Heart right ventricle (tissue), 16 donors: ENCODE measurements at regions of chr2 and their contacts with region 1.

Region 1: DNA sequence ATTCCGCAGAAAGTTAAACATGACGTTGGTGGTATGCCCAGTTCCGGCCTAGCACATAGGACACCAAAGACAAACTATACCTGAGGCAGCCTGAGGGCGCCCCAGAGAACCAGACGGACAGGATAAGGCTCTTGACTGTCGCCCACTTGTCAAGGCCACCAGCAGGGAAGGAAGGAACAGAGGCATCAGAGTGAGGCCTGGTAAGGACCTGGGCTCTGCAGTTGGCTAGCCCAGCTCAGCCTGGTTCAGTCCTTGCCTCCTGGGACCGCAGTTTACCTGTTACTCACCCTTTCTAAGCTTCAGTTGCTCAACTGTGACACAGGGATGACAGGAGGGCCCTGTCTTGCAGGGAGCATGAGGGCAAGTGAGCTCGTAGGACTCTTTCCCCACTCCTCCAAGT is 82.1 kb downstream of the ACTR2 start:
- DNase-seq: no peak
- ATAC-seq: peak in 2 of 8 donors; percentile 14 to 16
- H3K4me3 ChIP-seq: peak overlapping the region in 1 of 10 donors; percentile 9
- H3K27ac ChIP-seq: peak overlapping the region; percentile 52 to 90 (median 82)
- H3K4me1 ChIP-seq: peaks cover 9 to 50% (median 22%) of the 10 kb centered on the region in 9 donors
- H3K27me3 ChIP-seq: no peaks in the 10 kb centered on the region
- CTCF ChIP-seq: no peak

Region 2: DNA sequence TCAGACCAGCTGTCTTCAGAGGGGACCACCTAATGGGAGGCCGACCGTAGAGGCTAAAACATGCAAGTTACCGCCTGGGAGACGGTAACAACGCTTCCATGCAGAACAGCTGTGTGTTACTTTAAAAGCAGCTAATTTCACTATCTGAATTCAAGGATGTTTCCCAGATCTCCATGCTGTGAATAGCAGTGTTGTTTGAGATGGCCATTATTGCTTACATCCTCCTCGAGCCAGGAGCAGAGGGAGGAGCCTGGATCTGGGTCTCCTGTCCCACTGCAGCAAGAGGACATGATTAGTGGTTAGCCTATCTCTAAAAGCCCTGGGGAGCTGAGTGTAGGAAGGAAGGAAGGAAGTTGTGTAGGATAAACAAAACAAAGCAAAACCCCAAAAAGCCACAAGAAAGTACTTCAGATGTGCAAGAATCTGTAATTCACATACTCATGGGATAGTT is 31.2 kb before region 1 on chr2:
- intact Hi-C with region 1: loop called in 1 of 10 experiments (anchors 5 kb)
- DNase-seq: peak in 1 of 2 donors; percentile 30
- ATAC-seq: peak in 7 of 8 donors; percentile 39 to 73 (median 51)
- H3K4me3 ChIP-seq: no peak overlapping the region
- H3K27ac ChIP-seq: peak overlapping the region in 8 of 10 donors; percentile 7 to 57 (median 22)
- H3K4me1 ChIP-seq: peaks cover 10 to 64% (median 38%) of the 10 kb centered on the region in 9 donors
- H3K27me3 ChIP-seq: no peaks in the 10 kb centered on the region
- CTCF ChIP-seq: no peak

Region 3: GRCh38 chr2:65456064-65456463 is 146.4 kb after region 1 on chr2:
- intact Hi-C with region 1: no loop called
- DNase-seq: no peak
- ATAC-seq: no peak
- H3K4me3 ChIP-seq: no peak overlapping the region
- H3K27ac ChIP-seq: no peak overlapping the region
- H3K4me1 ChIP-seq: peaks cover 0 to 23% (median 0%) of the 10 kb centered on the region in 9 donors
- H3K27me3 ChIP-seq: no peaks in the 10 kb centered on the region
- CTCF ChIP-seq: no peak